T-cell (primary cell): ENCODE measurements at regions of chr6 and their contacts with region 1.

Region 1: GRCh38 chr6:6191475-6191874 is 129.0 kb downstream of the F13A1 start:
- DNase-seq: no peak
- ATAC-seq: no peak
- H3K4me3 ChIP-seq: no peak overlapping the region
- H3K4me3 Mint-ChIP-seq: no peak overlapping the region
- H3K27ac ChIP-seq: no peak overlapping the region
- H3K27ac Mint-ChIP-seq: no peak overlapping the region
- H3K4me1 ChIP-seq: no peaks in the 10 kb centered on the region
- H3K4me1 Mint-ChIP-seq: no peaks in the 10 kb centered on the region
- H3K27me3 ChIP-seq: peaks cover 0 to 6% of the 10 kb centered on the region in 2 experiments
- H3K27me3 Mint-ChIP-seq: peaks cover 26 to 33% of the 10 kb centered on the region in 2 donors

Region 2: GRCh38 chr6:4987432-4987831 is 1204.0 kb before region 1 on chr6:
- CTCF ChIA-PET with region 1: no interaction called
- POLR2A ChIA-PET with region 1: interaction called in 1 of 2 experiments, 10 read pairs
- DNase-seq: no peak
- ATAC-seq: no peak
- H3K4me3 ChIP-seq: no peak overlapping the region
- H3K4me3 Mint-ChIP-seq: no peak overlapping the region
- H3K27ac ChIP-seq: no peak overlapping the region
- H3K27ac Mint-ChIP-seq: no peak overlapping the region
- H3K4me1 ChIP-seq: no peaks in the 10 kb centered on the region
- H3K4me1 Mint-ChIP-seq: no peaks in the 10 kb centered on the region
- H3K27me3 ChIP-seq: peaks cover 0 to 7% of the 10 kb centered on the region in 2 experiments
- H3K27me3 Mint-ChIP-seq: peaks cover 0 to 5% of the 10 kb centered on the region in 2 donors

Region 3: DNA sequence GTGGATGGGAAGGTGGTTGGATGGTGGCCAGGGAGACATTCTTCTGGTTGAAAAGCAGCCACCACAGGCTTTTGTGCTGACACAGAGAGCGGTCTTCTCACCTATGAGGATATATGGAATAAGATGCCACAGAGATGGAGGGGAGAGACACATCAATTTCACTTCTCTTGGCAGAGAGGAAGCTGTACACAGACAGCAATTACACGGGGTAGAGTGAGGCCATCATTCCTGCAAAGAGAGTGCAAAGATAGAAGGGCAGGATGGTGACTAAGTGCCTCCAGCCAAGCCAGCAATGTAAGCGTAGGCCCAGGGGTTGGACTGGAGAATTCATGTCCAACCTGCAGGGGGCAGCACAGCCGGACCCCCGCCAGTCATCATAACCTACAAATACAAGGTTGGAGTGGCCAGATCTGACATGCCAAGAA is 241.1 kb before region 1 on chr6:
- CTCF ChIA-PET with region 1: no interaction called
- POLR2A ChIA-PET with region 1: no interaction called
- DNase-seq: peak in 4 of 35 experiments; percentile 1 to 21 (median 2)
- ATAC-seq: no peak
- H3K4me3 ChIP-seq: no peak overlapping the region
- H3K4me3 Mint-ChIP-seq: no peak overlapping the region
- H3K27ac ChIP-seq: no peak overlapping the region
- H3K27ac Mint-ChIP-seq: no peak overlapping the region
- H3K4me1 ChIP-seq: no peaks in the 10 kb centered on the region
- H3K4me1 Mint-ChIP-seq: no peaks in the 10 kb centered on the region
- H3K27me3 ChIP-seq: no peaks in the 10 kb centered on the region
- H3K27me3 Mint-ChIP-seq: peaks cover 7 to 22% of the 10 kb centered on the region in 2 donors